ENCODE measurements at regions of chr3 and their contacts with region 1.

Region 1: DNA sequence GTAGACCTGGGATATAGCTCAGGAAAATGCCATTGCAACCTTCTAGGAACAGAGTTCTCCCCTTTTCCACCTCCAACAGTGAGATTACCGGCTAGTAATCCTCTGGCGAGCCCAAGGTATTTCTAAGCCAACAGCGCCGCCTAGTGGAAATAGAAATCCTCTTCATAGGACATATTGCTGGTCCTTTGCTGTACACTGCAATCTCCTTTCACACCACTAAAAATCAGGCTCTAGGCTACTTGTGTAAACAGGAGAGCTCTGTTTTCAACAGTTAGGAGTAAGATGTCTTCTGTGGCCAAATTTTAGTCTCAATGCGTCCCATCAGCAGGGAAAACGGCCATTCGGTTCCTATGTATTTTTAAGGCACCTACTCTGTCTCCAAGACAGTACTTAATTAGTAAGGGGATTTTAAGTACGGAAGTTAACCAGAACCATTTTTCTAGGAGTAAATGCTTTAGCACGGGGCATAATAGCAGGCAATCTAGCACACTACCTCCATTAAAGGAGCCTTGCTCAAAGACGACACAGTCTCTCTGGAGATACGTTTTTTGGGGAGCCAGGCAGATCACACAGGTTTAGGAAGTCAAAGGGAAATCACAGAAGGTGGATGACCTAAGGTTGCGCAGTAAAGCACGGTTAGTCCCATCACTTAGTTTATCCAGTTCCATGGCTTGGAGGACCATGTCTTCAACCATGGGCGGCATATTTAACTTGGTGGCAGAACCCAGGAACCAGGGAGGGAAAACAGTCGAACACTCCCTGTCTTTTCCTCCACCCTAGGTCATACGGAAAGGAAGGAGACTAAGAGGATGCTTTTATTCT is 43.8 kb downstream of the NCEH1 start:
- DNase-seq: peak; percentile 90
- H3K4me3 Mint-ChIP-seq: no peak overlapping the region
- H3K27ac Mint-ChIP-seq: no peak overlapping the region
- H3K4me1 Mint-ChIP-seq: peaks cover 10% of the 10 kb centered on the region
- H3K27me3 Mint-ChIP-seq: no peaks in the 10 kb centered on the region
- CTCF ChIP-seq: peak; percentile 66

Region 2: GRCh38 chr3:172332256-172333041 is 334.6 kb before region 1 on chr3:
- CTCF ChIA-PET with region 1: interaction called, 29 read pairs
- POLR2A ChIA-PET with region 1: no interaction called
- intact Hi-C with region 1: loop called (anchors 2 kb)
- DNase-seq: peak; percentile 77
- H3K4me3 Mint-ChIP-seq: no peak overlapping the region
- H3K27ac Mint-ChIP-seq: no peak overlapping the region
- H3K4me1 Mint-ChIP-seq: no peaks in the 10 kb centered on the region
- H3K27me3 Mint-ChIP-seq: no peaks in the 10 kb centered on the region
- CTCF ChIP-seq: peak; percentile 83

Region 3: DNA sequence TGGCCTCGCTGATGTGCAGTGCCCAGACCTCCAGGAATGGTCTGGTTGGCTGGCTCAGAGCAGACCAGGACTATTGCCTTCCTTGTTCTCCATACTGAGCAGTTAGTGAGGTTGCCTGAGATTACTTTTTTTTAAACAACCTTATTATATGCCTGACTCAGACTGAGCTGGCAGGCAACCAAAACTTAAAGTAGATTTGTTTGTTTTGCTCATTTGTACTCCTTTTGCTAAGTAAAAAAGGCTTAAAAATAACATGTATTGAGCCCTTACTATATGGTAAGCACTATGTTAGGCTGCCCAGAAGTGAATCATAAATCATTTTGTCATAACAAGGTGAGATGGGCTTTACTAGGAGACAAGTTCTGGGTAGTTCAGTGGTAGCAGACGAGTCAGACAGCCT is 311.2 kb before region 1 on chr3:
- CTCF ChIA-PET with region 1: interaction called, 11 read pairs
- POLR2A ChIA-PET with region 1: no interaction called
- intact Hi-C with region 1: loop called (anchors 5 kb)
- DNase-seq: peak; percentile 85
- H3K4me3 Mint-ChIP-seq: no peak overlapping the region
- H3K27ac Mint-ChIP-seq: peak overlapping the region; percentile 52
- H3K4me1 Mint-ChIP-seq: peaks cover 16% of the 10 kb centered on the region
- H3K27me3 Mint-ChIP-seq: no peaks in the 10 kb centered on the region
- CTCF ChIP-seq: no peak

Region 4: DNA sequence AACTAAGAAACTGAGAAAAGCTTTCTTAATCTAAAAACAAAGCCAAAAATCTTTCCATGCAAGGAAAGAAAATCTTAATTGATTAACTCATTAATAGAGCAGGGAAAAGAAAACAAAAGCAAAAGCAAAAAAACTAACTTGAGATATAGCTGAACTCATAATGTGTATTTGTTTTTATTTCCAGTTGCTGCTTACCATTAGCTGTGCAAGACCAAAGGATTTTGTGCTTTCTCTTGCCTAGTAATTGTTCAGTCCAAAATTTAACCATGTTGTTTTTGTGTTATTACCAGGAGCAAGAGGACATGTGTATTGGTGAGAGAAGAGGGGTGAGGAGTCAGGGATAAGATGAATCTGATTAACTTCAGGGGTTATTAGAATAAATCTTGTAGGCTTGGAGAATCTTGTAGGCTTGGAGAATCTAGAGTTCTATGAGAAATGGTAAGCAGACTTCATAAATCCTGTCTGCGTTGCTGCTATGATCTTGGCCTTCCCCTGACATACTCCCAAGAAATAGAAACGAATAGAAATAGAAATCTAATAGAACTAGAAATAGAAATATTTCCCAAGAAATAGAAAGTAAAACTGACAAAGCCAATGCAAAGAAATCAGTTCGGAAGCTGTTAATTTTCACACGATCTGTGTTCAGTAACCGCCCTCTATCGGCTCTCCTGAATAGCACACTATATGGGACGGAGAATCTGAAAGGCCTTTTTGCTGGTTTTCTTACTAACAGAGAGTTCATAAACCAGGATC is 71.3 kb before region 1 on chr3:
- CTCF ChIA-PET with region 1: interaction called, 42 read pairs
- POLR2A ChIA-PET with region 1: interaction called, 4 read pairs
- intact Hi-C with region 1: loop called (anchors 2 kb)
- DNase-seq: peak; percentile 80
- H3K4me3 Mint-ChIP-seq: peak overlapping the region; percentile 55
- H3K27ac Mint-ChIP-seq: no peak overlapping the region
- H3K4me1 Mint-ChIP-seq: peaks cover 21% of the 10 kb centered on the region
- H3K27me3 Mint-ChIP-seq: no peaks in the 10 kb centered on the region
- CTCF ChIP-seq: peak; percentile 84

Region 5: GRCh38 chr3:172607305-172608121 is 59.6 kb before region 1 on chr3:
- CTCF ChIA-PET with region 1: interaction called, 10 read pairs
- POLR2A ChIA-PET with region 1: no interaction called
- intact Hi-C with region 1: no loop called
- DNase-seq: peak; percentile 92
- H3K4me3 Mint-ChIP-seq: no peak overlapping the region
- H3K27ac Mint-ChIP-seq: peak overlapping the region; percentile 39
- H3K4me1 Mint-ChIP-seq: peaks cover 18% of the 10 kb centered on the region
- H3K27me3 Mint-ChIP-seq: no peaks in the 10 kb centered on the region
- CTCF ChIP-seq: no peak

Region 6: GRCh38 chr3:172622916-172623700 is 44.0 kb before region 1 on chr3:
- CTCF ChIA-PET with region 1: interaction called, 8 read pairs
- POLR2A ChIA-PET with region 1: no interaction called
- intact Hi-C with region 1: loop called (anchors 1 kb)
- DNase-seq: peak; percentile 73
- H3K4me3 Mint-ChIP-seq: no peak overlapping the region
- H3K27ac Mint-ChIP-seq: no peak overlapping the region
- H3K4me1 Mint-ChIP-seq: peaks cover 34% of the 10 kb centered on the region
- H3K27me3 Mint-ChIP-seq: no peaks in the 10 kb centered on the region
- CTCF ChIP-seq: peak; percentile 48

Region 7: GRCh38 chr3:172653081-172653480 is 14.0 kb before region 1 on chr3:
- CTCF ChIA-PET with region 1: interaction called, 23 read pairs
- POLR2A ChIA-PET with region 1: interaction called, 3 read pairs
- intact Hi-C with region 1: no loop called
- DNase-seq: no peak
- H3K4me3 Mint-ChIP-seq: no peak overlapping the region
- H3K27ac Mint-ChIP-seq: no peak overlapping the region
- H3K4me1 Mint-ChIP-seq: no peaks in the 10 kb centered on the region
- H3K27me3 Mint-ChIP-seq: no peaks in the 10 kb centered on the region
- CTCF ChIP-seq: no peak